HEK293T (cell line): ENCODE measurements at regions of chr7 and their contacts with region 1.

Region 1: DNA sequence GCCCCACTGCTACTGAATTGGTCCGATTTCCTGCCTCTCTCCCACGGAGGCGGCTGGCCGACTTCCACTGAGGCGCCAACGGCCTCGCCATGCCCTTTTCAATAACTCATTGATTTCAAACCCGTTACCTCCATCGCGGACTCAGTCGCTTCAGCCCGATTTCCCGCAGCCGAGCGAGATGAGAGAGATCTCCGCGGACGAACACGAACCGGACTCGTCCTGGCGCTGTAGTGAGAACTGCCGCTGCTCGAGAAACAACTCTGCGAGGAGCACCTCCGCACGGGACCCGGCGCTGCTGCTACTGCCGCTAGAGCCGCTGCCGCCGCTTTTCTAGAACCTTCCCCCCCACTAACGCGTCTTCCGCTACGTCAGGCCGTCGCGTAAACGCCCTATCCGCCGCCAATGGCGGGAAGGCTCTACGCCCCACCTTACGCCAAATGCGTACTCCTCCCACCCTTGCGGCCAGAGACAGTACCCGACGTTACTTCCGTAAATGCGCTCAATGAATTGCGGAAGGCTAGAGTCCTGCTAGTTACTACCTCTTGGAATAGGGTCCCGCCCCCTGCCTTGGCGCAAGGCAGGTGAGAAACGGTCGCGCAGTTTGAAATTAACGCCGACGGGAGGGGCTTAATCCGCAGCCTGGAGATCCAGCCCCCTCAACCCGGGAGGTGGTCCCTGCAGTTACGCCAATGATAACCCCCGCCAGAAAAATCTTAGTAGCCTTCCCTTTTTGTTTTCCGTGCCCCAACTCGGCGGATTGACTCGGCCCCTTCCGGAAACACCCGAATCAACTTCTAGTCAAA is at the start of gene HNRNPA2B1:
- DNase-seq: peak; percentile 75

Region 2: DNA sequence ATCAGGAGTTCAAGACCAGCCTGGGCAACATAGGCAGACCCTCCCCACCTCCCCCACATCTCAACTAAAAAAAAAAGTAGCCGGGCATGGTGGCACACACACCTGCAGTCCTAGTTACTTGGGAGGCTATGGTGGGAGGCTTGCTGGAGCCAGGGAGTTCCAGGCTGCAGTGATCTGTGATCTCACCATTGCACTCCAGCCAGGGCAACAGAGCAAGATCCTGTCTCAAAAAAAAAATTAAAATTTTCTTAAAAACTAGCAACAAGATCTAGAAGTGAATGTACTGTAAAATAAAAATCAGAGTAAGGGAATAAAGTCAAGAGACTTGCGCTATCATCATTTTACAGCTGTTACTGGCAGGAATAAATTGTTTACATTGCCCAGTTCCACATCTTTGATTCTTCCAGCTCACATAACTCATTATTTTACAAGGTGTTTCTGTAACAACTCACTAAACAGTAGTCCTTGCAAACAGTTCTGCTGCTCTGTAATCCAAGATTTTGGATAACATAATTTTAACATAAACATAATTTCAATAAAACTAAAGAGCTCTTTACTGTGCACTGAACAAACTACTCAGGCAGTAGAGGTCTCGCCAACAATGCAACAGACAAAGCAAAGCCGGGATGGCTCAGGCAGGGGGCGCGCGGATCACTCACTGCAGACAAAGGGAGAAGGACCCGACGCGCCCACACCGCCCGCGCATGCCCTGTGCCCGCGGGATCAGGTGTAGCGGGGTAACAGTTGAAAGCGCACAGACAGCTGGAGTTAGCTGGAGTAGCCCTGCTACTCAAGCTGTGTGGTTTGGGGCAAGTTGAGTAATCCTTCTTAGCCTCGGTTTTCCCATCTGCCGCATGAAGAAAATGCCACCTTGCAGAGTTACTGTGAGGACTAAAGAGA is 122.0 kb before region 1 on chr7:
- CTCF ChIA-PET with region 1: no interaction called
- POLR2A ChIA-PET with region 1: interaction called, 10 read pairs
- DNase-seq: peak; percentile 77

Region 3: GRCh38 chr7:26090927-26091519 is 109.6 kb before region 1 on chr7:
- CTCF ChIA-PET with region 1: interaction called, 13 read pairs
- POLR2A ChIA-PET with region 1: interaction called, 5 read pairs
- DNase-seq: peak; percentile 61

Region 4: DNA sequence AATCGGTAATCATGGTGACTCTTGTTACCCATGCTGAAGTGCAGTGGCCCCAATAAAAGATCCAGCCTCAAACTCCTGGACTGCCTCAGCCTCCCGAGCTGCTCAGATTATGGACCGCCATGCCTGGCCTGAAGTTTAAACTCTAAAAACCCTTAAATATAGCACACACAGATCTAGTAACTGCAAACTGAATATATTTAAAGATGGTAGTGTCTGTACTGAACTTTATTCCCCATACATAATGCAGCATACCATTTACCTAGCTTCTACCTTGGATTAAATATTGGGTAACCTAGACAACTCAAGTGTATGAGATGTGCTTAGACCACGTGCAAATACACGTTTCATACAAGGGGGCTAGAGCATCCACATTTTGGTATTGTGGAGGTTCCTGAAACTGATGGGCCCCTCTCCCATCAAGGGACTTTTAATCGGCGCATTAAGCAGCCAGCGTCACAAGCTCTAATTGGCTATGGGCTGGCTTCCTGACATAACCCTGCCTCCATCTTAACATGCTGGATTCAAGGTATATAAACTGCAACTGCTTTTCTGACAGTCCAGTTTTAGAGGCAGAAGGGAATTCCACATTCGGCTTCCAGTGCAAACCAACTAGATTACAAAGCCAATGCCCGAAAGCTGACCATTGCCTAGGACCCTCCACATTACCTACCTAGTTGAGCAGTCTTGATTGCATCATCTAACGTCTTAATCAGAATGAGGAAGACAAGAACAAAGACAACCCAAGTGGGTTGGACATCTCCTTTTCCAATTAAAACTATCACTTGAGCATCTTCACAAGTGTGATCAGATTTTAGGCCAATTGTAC is 13.1 kb before region 1 on chr7:
- CTCF ChIA-PET with region 1: no interaction called
- POLR2A ChIA-PET with region 1: interaction called, 46 read pairs
- DNase-seq: no peak

Region 5: GRCh38 chr7:26307226-26307625 is 106.6 kb after region 1 on chr7:
- CTCF ChIA-PET with region 1: no interaction called
- POLR2A ChIA-PET with region 1: no interaction called
- DNase-seq: no peak

Region 6: DNA sequence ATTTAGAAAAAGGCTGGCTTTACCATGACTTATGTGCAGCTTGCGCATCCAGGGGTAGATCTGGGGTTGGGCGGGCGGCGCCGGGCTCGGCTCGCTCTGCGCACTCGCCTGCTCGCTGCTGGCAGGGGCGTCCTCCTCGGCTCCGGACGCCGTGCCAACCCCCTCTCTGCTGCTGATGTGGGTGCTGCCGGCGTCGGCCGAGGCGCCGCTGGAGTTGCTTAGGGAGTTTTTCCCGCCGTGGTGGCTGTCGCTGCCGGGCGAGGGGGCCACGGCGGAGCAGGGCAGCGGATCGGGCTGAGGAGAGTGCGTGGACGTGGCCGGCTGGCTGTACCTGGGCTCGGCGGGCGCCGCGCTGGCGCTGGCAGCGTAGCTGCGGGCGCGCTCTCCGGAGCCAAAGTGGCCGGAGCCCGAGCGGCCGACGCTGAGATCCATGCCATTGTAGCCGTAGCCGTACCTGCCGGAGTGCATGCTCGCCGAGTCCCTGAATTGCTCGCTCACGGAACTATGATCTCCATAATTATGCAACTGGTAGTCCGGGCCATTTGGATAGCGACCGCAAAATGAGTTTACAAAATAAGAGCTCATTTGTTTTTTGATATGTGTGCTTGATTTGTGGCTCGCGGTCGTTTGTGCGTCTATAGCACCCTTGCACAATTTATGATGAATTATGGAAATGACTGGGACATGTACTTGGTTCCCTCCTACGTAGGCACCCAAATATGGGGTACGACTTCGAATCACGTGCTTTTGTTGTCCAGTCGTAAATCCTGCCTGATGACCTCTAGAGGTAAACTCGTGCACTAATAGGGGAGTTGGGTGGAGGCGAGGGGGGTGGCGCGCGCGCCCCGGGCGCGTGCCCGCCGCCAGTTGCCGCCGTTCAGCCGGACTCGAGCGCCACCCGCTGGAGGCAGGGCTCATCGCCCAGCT is 942.6 kb after region 1 on chr7 and contains the start of gene HOXA5:
- CTCF ChIA-PET with region 1: no interaction called
- POLR2A ChIA-PET with region 1: interaction called, 11 read pairs
- DNase-seq: peak; percentile 79

Region 7: GRCh38 chr7:27150568-27151340 is 950.1 kb after region 1 on chr7:
- CTCF ChIA-PET with region 1: no interaction called
- POLR2A ChIA-PET with region 1: interaction called, 12 read pairs
- DNase-seq: no peak

Region 8: GRCh38 chr7:27172823-27173510 is 972.3 kb after region 1 on chr7:
- CTCF ChIA-PET with region 1: no interaction called
- POLR2A ChIA-PET with region 1: interaction called, 30 read pairs
- DNase-seq: no peak